Activated T-helper 1 cell treated with anti-CD3 and anti-CD28 coated beads, Interleukin-12 subunit alpha, Interleukin-12 subunit beta, Interleukin-2, Interleukin-4 antibody, amounts not matched to agents 30 ng/mL and 10 ng/mL and 1 ng/mL, durations not matched to agents 14 hours and 24 hours and 36 hours (primary cell): ENCODE measurements at regions of chr16 and their contacts with region 1.

Region 1: GRCh38 chr16:21952793-21953540 is at the start of gene UQCRC2:
- DNase-seq: peak; percentile 85
- H3K4me3 Mint-ChIP-seq: peak within 1 kb of the TSS; percentile 99
- H3K27ac Mint-ChIP-seq: peak within 1 kb of the TSS; percentile 95
- H3K4me1 Mint-ChIP-seq: peaks cover 50% of the 10 kb centered on the region
- H3K27me3 Mint-ChIP-seq: no peaks in the 10 kb centered on the region
- total RNA-seq, gene UQCRC2: 235 and 260 TPM in 2 replicates

Region 2: GRCh38 chr16:21989133-21989532 is 36.2 kb after region 1 on chr16:
- intact Hi-C with region 1: no loop called
- DNase-seq: no peak
- H3K4me3 Mint-ChIP-seq: no peak overlapping the region
- H3K27ac Mint-ChIP-seq: no peak overlapping the region
- H3K4me1 Mint-ChIP-seq: peaks cover 15% of the 10 kb centered on the region
- H3K27me3 Mint-ChIP-seq: no peaks in the 10 kb centered on the region

Region 3: DNA sequence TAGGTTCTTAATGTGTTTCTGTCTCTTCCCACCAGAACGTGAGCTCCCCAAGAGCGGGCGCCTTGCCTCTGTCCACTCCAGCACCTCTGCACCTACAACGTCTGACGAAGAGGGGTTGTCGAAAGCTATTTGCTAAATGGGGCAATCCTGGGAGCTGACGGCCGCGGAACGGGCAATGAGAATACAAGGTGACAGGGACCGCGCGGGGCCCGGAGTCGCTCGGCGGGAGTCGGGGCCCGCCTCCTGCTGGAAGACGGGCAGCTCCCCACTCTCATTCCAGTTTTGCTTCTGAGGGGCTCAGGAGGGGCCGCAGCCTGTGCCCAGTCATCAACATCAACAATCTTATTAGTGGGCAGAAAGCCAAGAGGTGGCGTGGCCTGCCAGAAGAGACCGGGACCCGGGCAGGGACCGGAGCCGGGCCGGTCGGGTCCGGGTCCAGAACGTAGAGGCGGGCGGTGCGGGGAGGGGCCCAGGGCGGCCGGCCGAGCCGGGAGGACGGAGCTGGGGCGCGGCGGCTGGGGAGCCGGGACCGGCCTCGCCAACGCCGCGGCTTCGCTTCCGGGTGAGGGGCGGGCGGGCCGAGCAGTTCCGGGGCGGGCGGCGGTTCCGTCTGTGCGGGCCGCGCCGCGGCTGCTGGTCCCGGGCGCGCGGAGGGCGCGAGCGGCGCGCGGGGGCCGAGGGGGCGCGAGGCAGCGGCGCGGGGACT is 54.7 kb after region 1 on chr16 and contains the start of gene MOSMO:
- intact Hi-C with region 1: loop called (anchors 2 kb)
- DNase-seq: peak; percentile 62
- H3K4me3 Mint-ChIP-seq: peak within 1 kb of the TSS; percentile 92
- H3K27ac Mint-ChIP-seq: peak within 1 kb of the TSS; percentile 79
- H3K4me1 Mint-ChIP-seq: peaks cover 49% of the 10 kb centered on the region
- H3K27me3 Mint-ChIP-seq: peaks cover 10% of the 10 kb centered on the region
- total RNA-seq, gene MOSMO: 12.7 and 16.3 TPM in 2 replicates